ENCODE measurements at regions of chr13 and their contacts with region 1.

Region 1: DNA sequence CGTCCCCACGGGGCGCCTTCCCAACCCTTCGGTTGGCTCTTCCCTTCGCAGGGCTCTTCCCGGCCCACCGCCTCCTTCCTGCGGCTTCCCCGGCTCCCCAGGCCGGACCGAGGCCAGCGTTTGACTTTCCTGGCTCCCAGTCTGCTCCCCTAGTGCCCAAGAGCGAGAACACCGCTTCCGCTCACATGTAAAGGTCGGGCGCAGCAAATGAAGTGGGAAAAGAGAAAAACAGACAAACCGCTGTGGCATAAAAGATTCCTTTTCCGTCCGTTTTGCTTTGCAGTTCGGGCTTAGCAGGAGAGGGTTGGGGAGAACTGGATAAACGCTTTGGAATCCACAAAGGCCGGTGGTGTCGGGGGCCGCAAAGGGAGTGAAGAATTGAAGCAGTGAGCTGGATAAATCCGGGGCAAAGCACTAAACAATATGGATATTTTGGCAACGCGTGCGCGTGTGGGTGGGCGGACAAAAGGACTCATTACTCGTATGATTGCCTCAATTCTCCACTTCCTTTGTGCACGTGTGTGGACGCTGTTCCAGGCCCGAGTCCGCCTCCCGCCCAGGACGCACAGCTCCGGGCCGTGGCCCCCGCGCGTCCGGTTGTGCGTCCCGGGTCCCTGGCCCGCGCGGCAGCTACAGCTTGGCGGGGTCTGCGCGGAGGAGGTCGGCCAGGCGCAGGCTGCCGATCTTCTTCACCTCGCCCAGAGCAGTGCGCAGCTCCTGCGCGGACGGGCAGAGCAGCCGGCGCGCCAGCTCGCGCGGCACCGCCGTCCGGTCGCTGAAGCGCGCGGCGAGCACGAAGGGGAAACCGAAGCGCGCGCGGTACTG is 8.6 kb upstream of the CDX2 start:
- DNase-seq: no peak
- ATAC-seq: no peak
- H3K4me3 Mint-ChIP-seq: no peak overlapping the region
- H3K27ac Mint-ChIP-seq: no peak overlapping the region
- H3K4me1 Mint-ChIP-seq: peaks cover 36% of the 10 kb centered on the region
- H3K27me3 Mint-ChIP-seq: peaks cover 79% of the 10 kb centered on the region
- CTCF ChIP-seq: no peak

Region 2: GRCh38 chr13:27533155-27533643 is 444.5 kb before region 1 on chr13:
- CTCF ChIA-PET with region 1: no interaction called
- POLR2A ChIA-PET with region 1: no interaction called
- intact Hi-C with region 1: loop called (anchors 5 kb)
- DNase-seq: peak; percentile 39
- ATAC-seq: peak; percentile 72
- H3K4me3 Mint-ChIP-seq: peak overlapping the region; percentile 36
- H3K27ac Mint-ChIP-seq: no peak overlapping the region
- H3K4me1 Mint-ChIP-seq: peaks cover 23% of the 10 kb centered on the region
- H3K27me3 Mint-ChIP-seq: no peaks in the 10 kb centered on the region
- CTCF ChIP-seq: peak; percentile 53

Region 3: DNA sequence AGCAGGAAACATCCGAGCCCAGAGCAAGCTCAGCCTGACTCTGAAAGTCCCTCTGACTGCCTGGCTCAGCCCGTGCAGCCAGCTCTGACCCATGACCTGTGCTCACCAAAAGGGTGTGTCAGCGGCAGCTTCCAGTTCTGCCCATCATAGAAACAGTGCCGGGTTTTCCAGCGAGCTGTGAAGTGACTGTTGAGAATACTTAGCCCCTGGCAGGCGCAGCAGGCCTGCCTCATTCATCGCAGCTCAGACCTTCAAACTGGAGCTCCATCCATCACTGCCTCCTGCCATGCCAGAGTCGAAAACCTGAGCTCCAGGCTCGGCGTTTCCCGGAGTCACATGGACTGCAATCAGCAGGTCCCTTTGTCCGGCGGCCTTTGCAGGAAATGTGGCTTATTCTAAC is 201.7 kb before region 1 on chr13:
- CTCF ChIA-PET with region 1: no interaction called
- POLR2A ChIA-PET with region 1: no interaction called
- intact Hi-C with region 1: no loop called
- DNase-seq: no peak
- ATAC-seq: no peak
- H3K4me3 Mint-ChIP-seq: no peak overlapping the region
- H3K27ac Mint-ChIP-seq: no peak overlapping the region
- H3K4me1 Mint-ChIP-seq: peaks cover 7% of the 10 kb centered on the region
- H3K27me3 Mint-ChIP-seq: peaks cover 49% of the 10 kb centered on the region
- CTCF ChIP-seq: no peak

Region 4: GRCh38 chr13:27792393-27793218 is 185.1 kb before region 1 on chr13 and contains the start of gene GSX1:
- CTCF ChIA-PET with region 1: no interaction called
- POLR2A ChIA-PET with region 1: no interaction called
- intact Hi-C with region 1: loop called (anchors 5 kb)
- DNase-seq: peak; percentile 33
- ATAC-seq: peak; percentile 70
- H3K4me3 Mint-ChIP-seq: peak within 1 kb of the TSS; percentile 82
- H3K27ac Mint-ChIP-seq: no peak within 1 kb of the TSS
- H3K4me1 Mint-ChIP-seq: peaks cover 37% of the 10 kb centered on the region
- H3K27me3 Mint-ChIP-seq: peaks cover 71% of the 10 kb centered on the region
- CTCF ChIP-seq: no peak
- total RNA-seq, gene GSX1: not detected in 2 replicates

Region 5: GRCh38 chr13:27919934-27920676 is 57.6 kb before region 1 on chr13 and contains the start of gene PDX1:
- CTCF ChIA-PET with region 1: no interaction called
- POLR2A ChIA-PET with region 1: no interaction called
- intact Hi-C with region 1: loop called (anchors 2 kb)
- DNase-seq: no peak
- ATAC-seq: peak; percentile 71
- H3K4me3 Mint-ChIP-seq: peak within 1 kb of the TSS; percentile 71
- H3K27ac Mint-ChIP-seq: peak within 1 kb of the TSS; percentile 46
- H3K4me1 Mint-ChIP-seq: peaks cover 41% of the 10 kb centered on the region
- H3K27me3 Mint-ChIP-seq: peaks cover 64% of the 10 kb centered on the region
- CTCF ChIP-seq: no peak
- total RNA-seq, gene PDX1: not detected in 2 replicates

Region 6: GRCh38 chr13:29397265-29397664 is 1419.6 kb after region 1 on chr13:
- CTCF ChIA-PET with region 1: no interaction called
- POLR2A ChIA-PET with region 1: no interaction called
- intact Hi-C with region 1: no loop called
- DNase-seq: no peak
- ATAC-seq: no peak
- H3K4me3 Mint-ChIP-seq: no peak overlapping the region
- H3K27ac Mint-ChIP-seq: no peak overlapping the region
- H3K4me1 Mint-ChIP-seq: no peaks in the 10 kb centered on the region
- H3K27me3 Mint-ChIP-seq: peaks cover 27% of the 10 kb centered on the region
- CTCF ChIP-seq: no peak